HEK293 (cell line): ENCODE measurements at regions of chr5 and their contacts with region 1.

Region 1: DNA sequence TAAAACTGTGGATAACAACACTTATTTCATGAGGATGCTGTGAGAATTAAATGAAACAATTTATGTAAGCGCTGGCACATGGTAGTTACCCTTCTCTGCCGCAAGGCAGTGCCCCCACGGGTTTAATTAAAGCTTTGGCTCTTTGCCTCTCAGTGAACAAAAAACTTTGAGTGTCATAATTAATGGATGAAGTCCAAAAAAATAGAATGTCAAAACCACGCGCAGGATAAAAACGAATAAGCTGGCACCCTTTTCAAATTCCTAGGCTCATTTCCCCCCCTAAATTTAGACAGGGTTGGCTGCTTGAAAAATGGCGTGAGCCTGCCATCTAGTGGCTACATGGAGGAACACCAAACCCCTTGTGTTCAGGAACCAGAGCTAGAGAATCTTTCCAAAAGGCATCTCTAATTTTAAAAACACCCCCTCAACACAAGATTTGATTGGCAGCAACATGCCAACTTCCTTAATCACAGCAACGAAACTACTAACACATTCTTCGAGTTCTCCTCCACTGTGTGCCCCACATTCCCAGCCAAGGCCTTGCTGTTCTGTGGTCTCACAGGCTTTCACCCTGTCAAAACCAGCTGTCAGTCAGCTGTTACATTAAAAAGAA is 29.0 kb upstream of the CCNG1 start:
- H3K4me3 ChIP-seq: no peak overlapping the region
- H3K27ac ChIP-seq: no peak overlapping the region
- H3K4me1 ChIP-seq: no peaks in the 10 kb centered on the region
- CTCF ChIP-seq: peak; percentile 80

Region 2: DNA sequence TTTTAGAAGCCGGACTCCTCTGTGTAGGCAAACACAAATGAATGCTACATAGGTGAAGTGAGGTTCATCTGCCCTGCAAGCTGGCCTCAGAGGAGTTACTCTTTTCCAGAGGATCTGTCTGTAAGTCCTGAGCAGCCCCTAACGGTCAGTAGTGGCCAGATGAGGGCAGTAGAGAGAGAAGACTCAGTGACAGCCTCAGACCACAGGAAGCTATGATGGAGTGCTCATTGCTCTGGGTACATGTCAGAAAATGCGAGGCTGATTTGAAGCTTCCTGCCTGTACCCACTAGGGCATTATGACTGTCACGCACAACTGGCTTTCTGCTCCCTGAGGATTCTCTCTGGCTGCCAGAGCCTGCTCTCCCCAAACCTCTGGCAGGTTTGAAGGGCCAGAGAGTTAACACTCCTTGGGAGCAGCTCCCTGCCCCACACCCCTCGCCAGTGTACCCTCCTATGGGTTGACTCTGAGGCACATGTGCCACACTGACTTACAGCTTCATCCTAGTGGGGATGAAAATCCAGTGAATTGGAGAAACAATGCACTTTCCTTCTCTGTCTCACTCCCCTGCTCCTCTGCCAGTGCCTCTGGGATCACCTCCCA is 1199.3 kb before region 1 on chr5:
- CTCF ChIA-PET with region 1: interaction called, 12 read pairs
- POLR2A ChIA-PET with region 1: no interaction called
- H3K4me3 ChIP-seq: no peak overlapping the region
- H3K27ac ChIP-seq: no peak overlapping the region
- H3K4me1 ChIP-seq: no peaks in the 10 kb centered on the region
- CTCF ChIP-seq: no peak

Region 3: DNA sequence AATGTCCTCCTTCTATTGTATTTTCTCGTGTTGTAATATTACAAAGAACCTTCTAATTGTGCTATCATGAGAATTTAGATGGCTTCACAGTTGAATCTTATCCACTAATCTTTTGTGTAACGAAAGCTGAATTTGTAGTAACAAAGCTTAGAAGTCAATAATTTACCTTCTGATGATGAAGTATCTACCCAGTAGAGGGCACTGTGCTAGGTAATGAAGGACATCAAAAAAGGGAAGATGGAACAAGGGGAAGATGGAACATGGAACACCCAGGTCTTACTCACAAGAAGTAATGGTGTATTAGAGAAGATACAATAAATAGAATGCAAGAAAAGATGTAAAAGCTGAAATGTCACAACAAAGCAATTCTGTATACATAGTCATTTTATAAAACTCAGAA is 102.0 kb before region 1 on chr5:
- CTCF ChIA-PET with region 1: interaction called, 25 read pairs
- POLR2A ChIA-PET with region 1: no interaction called
- H3K4me3 ChIP-seq: no peak overlapping the region
- H3K27ac ChIP-seq: no peak overlapping the region
- H3K4me1 ChIP-seq: no peaks in the 10 kb centered on the region
- CTCF ChIP-seq: no peak

Region 4: GRCh38 chr5:163473635-163474243 is 65.3 kb after region 1 on chr5:
- CTCF ChIA-PET with region 1: no interaction called
- POLR2A ChIA-PET with region 1: no interaction called
- H3K4me3 ChIP-seq: no peak overlapping the region
- H3K27ac ChIP-seq: no peak overlapping the region
- H3K4me1 ChIP-seq: no peaks in the 10 kb centered on the region
- CTCF ChIP-seq: no peak